B cell (primary cell): ENCODE measurements at regions of chr3 and their contacts with region 1.

Region 1: DNA sequence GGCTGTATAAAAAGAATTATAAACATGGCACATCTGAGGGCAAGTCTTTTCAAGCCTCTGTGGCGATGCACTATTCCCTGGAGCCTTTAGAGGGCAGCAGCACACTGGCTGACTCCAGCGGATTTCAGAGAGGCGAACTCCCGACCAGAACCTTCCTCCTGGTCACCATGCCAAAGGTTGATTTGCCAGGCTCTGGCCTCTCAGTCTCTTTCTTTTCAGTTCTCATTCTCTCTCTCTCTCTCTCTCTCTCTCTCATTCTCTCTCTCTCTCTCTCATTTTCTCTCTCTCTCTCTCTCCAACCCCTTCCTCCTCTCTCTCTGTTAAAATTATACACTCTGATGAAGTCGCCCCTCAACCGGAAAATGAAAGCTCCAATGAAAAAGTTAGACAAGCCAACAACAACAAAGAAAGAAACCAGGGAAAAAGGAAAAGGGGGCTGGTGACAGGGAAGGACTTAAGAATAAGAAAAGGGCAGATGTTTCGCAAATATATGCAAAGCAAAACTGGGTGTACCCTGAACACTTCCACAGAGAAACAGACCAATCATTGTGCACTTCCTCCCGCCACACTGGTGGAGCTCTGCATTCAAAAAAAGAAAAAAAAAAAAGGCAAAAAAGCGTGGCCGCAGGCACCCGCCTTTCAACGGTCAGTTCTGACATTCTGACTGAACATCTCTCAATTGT is 90.2 kb downstream of the TIGIT start:
- DNase-seq: peak; percentile 73
- ATAC-seq: peak; percentile 91
- H3K4me3 ChIP-seq: peak overlapping the region in 4 of 5 experiments; percentile 26 to 58 (median 45)
- H3K4me3 Mint-ChIP-seq: peak overlapping the region; percentile 75
- H3K27ac ChIP-seq: peak overlapping the region in 1 of 2 donors; percentile 67
- H3K27ac Mint-ChIP-seq: peak overlapping the region; percentile 38
- H3K4me1 ChIP-seq: peaks cover 4 to 11% of the 10 kb centered on the region in 2 donors
- H3K4me1 Mint-ChIP-seq: peaks cover 2% of the 10 kb centered on the region
- H3K27me3 ChIP-seq: no peaks in the 10 kb centered on the region
- H3K27me3 Mint-ChIP-seq: no peaks in the 10 kb centered on the region
- CTCF ChIP-seq: peak; percentile 92

Region 2: DNA sequence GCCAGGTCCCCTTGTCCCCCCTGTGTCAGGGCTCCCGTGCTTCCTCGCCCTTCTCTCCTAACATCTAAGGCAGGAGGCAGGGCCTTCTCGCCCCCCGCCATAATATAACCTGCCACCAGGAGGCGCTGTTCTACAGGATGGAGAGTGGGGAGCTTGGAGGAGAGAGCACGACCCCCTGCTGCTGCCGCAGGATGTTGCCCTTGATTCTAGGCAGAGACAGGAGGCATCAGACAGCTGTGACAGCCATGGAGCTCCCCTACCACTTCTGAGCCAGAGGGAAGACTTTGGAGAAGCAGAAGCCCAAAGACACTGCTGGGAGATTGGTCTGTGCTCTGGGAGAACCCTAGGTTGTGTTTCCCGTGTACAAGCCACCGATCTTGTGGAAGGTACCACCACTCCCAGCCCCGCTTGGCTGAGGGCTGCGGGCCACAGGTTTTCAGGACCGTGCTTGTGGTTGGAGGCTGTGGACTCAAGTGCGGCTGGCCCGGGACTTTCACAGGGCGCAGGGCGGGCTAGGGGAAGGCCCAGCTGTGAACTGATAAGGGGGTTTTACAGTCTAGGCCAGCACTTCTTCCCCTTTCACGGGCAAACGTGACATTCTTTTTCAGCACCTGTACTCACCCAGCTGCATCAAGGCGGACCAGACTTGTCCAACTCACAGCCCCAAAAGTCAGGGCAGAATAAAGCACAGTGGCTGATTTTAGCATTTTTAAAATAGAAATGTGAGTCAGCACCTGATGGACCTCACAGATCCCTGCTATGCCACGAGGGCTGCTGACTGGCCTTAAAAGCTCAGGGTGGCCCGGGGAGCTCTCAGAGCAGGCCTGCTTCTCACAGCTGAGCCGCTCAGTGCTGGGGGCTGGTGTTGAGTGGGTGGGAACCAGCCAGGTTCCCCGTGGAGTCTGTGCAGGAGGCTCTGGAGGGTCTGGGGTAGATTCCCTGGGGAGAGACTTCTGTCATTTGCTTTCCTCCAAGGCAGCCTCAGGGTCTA is 92.8 kb before region 1 on chr3:
- CTCF ChIA-PET with region 1: interaction called, 15 read pairs
- POLR2A ChIA-PET with region 1: no interaction called
- intact Hi-C with region 1: no loop called
- DNase-seq: peak; percentile 94
- ATAC-seq: peak; percentile 86
- H3K4me3 ChIP-seq: peak overlapping the region in 2 of 5 experiments; percentile 33 to 40
- H3K4me3 Mint-ChIP-seq: peak overlapping the region; percentile 83
- H3K27ac ChIP-seq: peak overlapping the region; percentile 93
- H3K27ac Mint-ChIP-seq: peak overlapping the region; percentile 97
- H3K4me1 ChIP-seq: peaks cover 13 to 18% of the 10 kb centered on the region in 2 donors
- H3K4me1 Mint-ChIP-seq: peaks cover 30% of the 10 kb centered on the region
- H3K27me3 ChIP-seq: no peaks in the 10 kb centered on the region
- H3K27me3 Mint-ChIP-seq: no peaks in the 10 kb centered on the region
- CTCF ChIP-seq: peak; percentile 92

Region 3: GRCh38 chr3:114405202-114405990 is 21.4 kb after region 1 on chr3:
- CTCF ChIA-PET with region 1: interaction called, 36 read pairs
- POLR2A ChIA-PET with region 1: no interaction called
- intact Hi-C with region 1: no loop called
- DNase-seq: peak; percentile 56
- ATAC-seq: peak; percentile 77
- H3K4me3 ChIP-seq: no peak overlapping the region
- H3K4me3 Mint-ChIP-seq: no peak overlapping the region
- H3K27ac ChIP-seq: no peak overlapping the region
- H3K27ac Mint-ChIP-seq: peak overlapping the region; percentile 4
- H3K4me1 ChIP-seq: peaks cover 3 to 4% of the 10 kb centered on the region in 2 donors
- H3K4me1 Mint-ChIP-seq: peaks cover 24% of the 10 kb centered on the region
- H3K27me3 ChIP-seq: no peaks in the 10 kb centered on the region
- H3K27me3 Mint-ChIP-seq: no peaks in the 10 kb centered on the region
- CTCF ChIP-seq: no peak

Region 4: GRCh38 chr3:114582929-114583328 is 198.9 kb after region 1 on chr3:
- CTCF ChIA-PET with region 1: interaction called, 13 read pairs
- POLR2A ChIA-PET with region 1: no interaction called
- intact Hi-C with region 1: loop called (anchors 2 kb)
- DNase-seq: peak; percentile 13
- ATAC-seq: no peak
- H3K4me3 ChIP-seq: no peak overlapping the region
- H3K4me3 Mint-ChIP-seq: peak overlapping the region; percentile 10
- H3K27ac ChIP-seq: no peak overlapping the region
- H3K27ac Mint-ChIP-seq: peak overlapping the region; percentile 46
- H3K4me1 ChIP-seq: no peaks in the 10 kb centered on the region
- H3K4me1 Mint-ChIP-seq: peaks cover 29% of the 10 kb centered on the region
- H3K27me3 ChIP-seq: no peaks in the 10 kb centered on the region
- H3K27me3 Mint-ChIP-seq: no peaks in the 10 kb centered on the region
- CTCF ChIP-seq: no peak

Region 5: GRCh38 chr3:115692887-115693524 is 1309.0 kb after region 1 on chr3:
- CTCF ChIA-PET with region 1: interaction called, 3 read pairs
- POLR2A ChIA-PET with region 1: no interaction called
- intact Hi-C with region 1: loop called (anchors 2 kb)
- DNase-seq: peak; percentile 79
- ATAC-seq: peak; percentile 94
- H3K4me3 ChIP-seq: no peak overlapping the region
- H3K4me3 Mint-ChIP-seq: no peak overlapping the region
- H3K27ac ChIP-seq: no peak overlapping the region
- H3K27ac Mint-ChIP-seq: no peak overlapping the region
- H3K4me1 ChIP-seq: no peaks in the 10 kb centered on the region
- H3K4me1 Mint-ChIP-seq: no peaks in the 10 kb centered on the region
- H3K27me3 ChIP-seq: no peaks in the 10 kb centered on the region
- H3K27me3 Mint-ChIP-seq: peaks cover 4% of the 10 kb centered on the region
- CTCF ChIP-seq: peak; percentile 85